HCT116 (cell line): ENCODE measurements at regions of chr5 and their contacts with region 1.

Region 1: DNA sequence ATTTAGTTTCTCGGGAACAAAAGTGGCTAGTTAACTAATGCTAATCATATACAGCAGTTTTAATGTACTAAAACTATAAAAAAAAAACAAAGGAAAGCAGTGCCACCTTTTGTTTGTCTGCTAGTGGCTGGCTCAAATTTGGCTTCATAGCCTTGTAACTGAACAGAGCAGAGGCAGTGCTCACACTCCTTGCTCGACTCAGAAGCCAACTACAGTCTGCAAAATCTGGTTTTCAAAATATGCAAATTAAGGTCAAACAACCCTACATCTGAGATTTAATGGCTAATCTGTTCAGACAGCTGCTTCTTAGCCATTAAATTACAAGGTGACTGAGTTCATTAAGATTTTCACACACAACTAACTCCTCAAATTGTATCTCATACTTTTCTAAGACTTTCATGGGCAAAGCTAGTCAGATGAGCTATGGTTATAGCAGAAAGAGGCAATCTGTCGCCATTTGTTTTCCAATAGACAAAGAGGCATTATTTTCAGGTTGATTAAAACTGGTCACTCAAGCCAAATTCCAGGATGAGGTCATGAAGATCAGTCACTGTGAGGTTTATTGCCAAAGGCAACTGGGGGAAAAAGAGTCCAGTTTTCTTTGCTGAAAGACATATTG is 56.8 kb upstream of the EPB41L4A start:
- DNase-seq: no peak
- ATAC-seq: no peak
- H3K4me3 ChIP-seq: no peak overlapping the region
- H3K27ac ChIP-seq: no peak overlapping the region
- H3K4me1 ChIP-seq: peaks cover 11 to 12% of the 10 kb centered on the region in 2 experiments; a peak in 3 of 4 replicates
- H3K27me3 ChIP-seq: no peaks in the 10 kb centered on the region
- CTCF ChIP-seq: no peak
- POLR2A ChIP-seq: no peak
- RAD21 ChIP-seq: no peak

Region 2: GRCh38 chr5:112492291-112492690 is 16.4 kb after region 1 on chr5:
- CTCF ChIA-PET with region 1: interaction called, 14 read pairs
- POLR2A ChIA-PET with region 1: no interaction called
- RAD21 ChIA-PET with region 1: no interaction called
- intact Hi-C with region 1: no loop called
- DNase-seq: peak; percentile 57
- ATAC-seq: peak; percentile 97
- H3K4me3 ChIP-seq: no peak overlapping the region
- H3K27ac ChIP-seq: no peak overlapping the region
- H3K4me1 ChIP-seq: no peaks in the 10 kb centered on the region
- H3K27me3 ChIP-seq: no peaks in the 10 kb centered on the region
- CTCF ChIP-seq: peak; percentile 79 to 93 (median 81)
- POLR2A ChIP-seq: no peak
- RAD21 ChIP-seq: peak; percentile 56

Region 3: DNA sequence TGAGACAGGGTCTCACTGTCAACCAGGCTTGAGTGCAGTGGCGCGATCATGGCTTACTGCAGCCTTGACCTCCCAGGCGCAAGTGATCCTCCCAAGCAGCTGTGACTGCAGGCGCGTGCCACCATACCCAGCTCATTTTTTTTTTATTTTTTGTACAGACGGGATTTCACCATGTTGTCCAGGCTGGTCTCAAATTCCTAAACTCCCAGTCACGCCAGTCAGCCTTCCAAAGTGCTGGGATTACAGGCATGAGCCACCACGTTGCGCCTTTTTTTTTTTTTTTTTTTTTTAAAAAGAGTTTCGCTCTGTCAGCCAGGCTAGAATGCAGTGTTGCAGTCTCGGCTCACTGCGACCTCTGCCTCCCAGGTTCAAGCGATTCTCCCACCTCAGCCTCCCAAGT is 358.1 kb after region 1 on chr5:
- CTCF ChIA-PET with region 1: no interaction called
- POLR2A ChIA-PET with region 1: no interaction called
- RAD21 ChIA-PET with region 1: no interaction called
- intact Hi-C with region 1: no loop called
- DNase-seq: no peak
- ATAC-seq: no peak
- H3K4me3 ChIP-seq: no peak overlapping the region
- H3K27ac ChIP-seq: no peak overlapping the region
- H3K4me1 ChIP-seq: no peaks in the 10 kb centered on the region
- H3K27me3 ChIP-seq: no peaks in the 10 kb centered on the region
- CTCF ChIP-seq: no peak
- POLR2A ChIP-seq: no peak
- RAD21 ChIP-seq: no peak